ENCODE measurements at regions of chr6 and their contacts with region 1.

Region 1: DNA sequence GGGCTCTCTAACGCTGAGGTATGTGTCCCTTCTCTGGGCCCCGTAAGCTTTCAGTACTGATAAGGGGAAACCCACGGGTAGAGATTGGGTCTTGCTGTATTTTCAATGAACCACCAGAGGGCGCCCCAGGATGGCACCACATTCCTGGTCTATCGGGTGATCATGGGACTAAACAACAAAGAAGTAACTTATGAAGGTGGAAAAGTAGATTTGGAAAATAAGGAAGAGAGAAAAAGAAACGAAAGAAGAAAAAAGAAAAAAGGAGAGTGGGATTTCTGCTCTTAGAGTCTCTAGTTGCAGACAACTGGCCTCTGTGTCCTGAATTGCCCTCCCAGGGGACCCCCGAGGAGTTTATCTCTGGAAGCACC is 93.8 kb downstream of the GMPR start:
- DNase-seq: peak; percentile 94
- H3K4me3 Mint-ChIP-seq: no peak overlapping the region
- H3K27ac Mint-ChIP-seq: no peak overlapping the region
- H3K4me1 Mint-ChIP-seq: no peaks in the 10 kb centered on the region
- H3K27me3 Mint-ChIP-seq: no peaks in the 10 kb centered on the region

Region 2: GRCh38 chr6:15504581-15505350 is 827.4 kb before region 1 on chr6:
- CTCF ChIA-PET with region 1: no interaction called
- intact Hi-C with region 1: no loop called
- DNase-seq: no peak
- H3K4me3 Mint-ChIP-seq: no peak overlapping the region
- H3K27ac Mint-ChIP-seq: no peak overlapping the region
- H3K4me1 Mint-ChIP-seq: no peaks in the 10 kb centered on the region
- H3K27me3 Mint-ChIP-seq: no peaks in the 10 kb centered on the region

Region 3: DNA sequence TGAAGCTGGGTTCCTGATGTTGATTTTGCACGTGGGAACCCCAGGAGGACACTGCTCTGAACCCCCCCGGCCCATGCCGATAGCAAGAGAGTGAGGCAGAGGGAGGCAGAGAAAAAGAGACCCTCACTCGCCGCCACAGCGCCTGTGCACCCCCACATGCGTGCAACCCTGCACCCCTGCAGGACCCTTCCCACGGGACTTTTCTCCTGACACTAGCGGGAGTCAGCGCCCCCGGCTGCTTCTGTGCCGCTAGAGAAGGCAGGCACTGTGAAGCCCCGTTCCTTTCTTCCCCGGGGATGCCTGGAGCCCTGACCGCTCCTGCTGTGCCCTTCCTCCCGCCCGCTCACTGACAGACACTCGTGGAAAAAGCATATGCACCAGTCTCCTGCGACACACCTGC is 26.4 kb before region 1 on chr6:
- CTCF ChIA-PET with region 1: no interaction called
- intact Hi-C with region 1: no loop called
- DNase-seq: no peak
- H3K4me3 Mint-ChIP-seq: no peak overlapping the region
- H3K27ac Mint-ChIP-seq: no peak overlapping the region
- H3K4me1 Mint-ChIP-seq: no peaks in the 10 kb centered on the region
- H3K27me3 Mint-ChIP-seq: no peaks in the 10 kb centered on the region

Region 4: GRCh38 chr6:16343593-16343992 is 11.4 kb after region 1 on chr6:
- CTCF ChIA-PET with region 1: interaction called, 11 read pairs
- intact Hi-C with region 1: no loop called
- DNase-seq: no peak
- H3K4me3 Mint-ChIP-seq: no peak overlapping the region
- H3K27ac Mint-ChIP-seq: no peak overlapping the region
- H3K4me1 Mint-ChIP-seq: peaks cover 5% of the 10 kb centered on the region
- H3K27me3 Mint-ChIP-seq: no peaks in the 10 kb centered on the region

Region 5: DNA sequence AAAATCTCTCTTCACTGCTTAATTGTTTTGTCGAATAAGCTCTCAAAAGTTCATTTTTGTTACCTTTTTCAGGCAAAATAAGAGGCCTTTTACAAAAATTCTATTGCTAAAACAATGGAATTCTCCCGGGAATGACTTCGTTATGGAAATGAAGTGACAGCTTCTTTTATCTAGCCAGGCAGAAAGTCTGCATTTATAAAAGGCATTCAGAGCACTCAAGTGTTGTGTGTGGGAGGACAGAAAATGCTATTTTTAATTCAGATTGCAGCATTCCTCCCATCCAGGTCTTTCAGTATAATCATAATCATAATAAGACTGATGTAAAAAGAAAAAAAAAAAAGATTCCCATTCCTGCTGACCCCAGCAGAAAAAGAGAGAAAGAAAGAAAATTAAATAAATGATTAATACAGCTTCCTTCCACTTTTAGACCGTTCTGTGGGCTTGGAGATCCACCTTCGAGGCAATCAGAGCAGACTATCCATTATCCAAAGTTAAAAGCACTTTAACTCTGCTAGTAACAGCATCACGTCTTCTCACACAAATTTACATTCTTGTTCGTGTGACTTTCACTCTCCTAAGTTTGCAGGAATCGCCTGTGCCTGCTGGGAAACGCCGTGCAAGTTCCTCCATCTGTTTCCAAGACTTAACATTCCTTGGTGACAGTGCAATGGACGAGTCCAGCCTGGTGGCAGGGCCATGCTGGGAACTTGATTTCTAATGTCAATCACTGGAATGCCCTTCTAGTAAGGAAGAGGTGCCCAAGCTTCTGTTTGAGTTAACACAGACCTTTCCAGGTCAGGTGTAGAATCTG is 165.0 kb after region 1 on chr6:
- CTCF ChIA-PET with region 1: interaction called, 5 read pairs
- intact Hi-C with region 1: loop called (anchors 1 kb)
- DNase-seq: no peak
- H3K4me3 Mint-ChIP-seq: no peak overlapping the region
- H3K27ac Mint-ChIP-seq: no peak overlapping the region
- H3K4me1 Mint-ChIP-seq: peaks cover 32% of the 10 kb centered on the region
- H3K27me3 Mint-ChIP-seq: no peaks in the 10 kb centered on the region

Region 6: GRCh38 chr6:16819752-16820151 is 487.6 kb after region 1 on chr6:
- CTCF ChIA-PET with region 1: interaction called, 4 read pairs
- intact Hi-C with region 1: loop called (anchors 1 kb)
- DNase-seq: no peak
- H3K4me3 Mint-ChIP-seq: no peak overlapping the region
- H3K27ac Mint-ChIP-seq: no peak overlapping the region
- H3K4me1 Mint-ChIP-seq: no peaks in the 10 kb centered on the region
- H3K27me3 Mint-ChIP-seq: peaks cover 12% of the 10 kb centered on the region

Region 7: DNA sequence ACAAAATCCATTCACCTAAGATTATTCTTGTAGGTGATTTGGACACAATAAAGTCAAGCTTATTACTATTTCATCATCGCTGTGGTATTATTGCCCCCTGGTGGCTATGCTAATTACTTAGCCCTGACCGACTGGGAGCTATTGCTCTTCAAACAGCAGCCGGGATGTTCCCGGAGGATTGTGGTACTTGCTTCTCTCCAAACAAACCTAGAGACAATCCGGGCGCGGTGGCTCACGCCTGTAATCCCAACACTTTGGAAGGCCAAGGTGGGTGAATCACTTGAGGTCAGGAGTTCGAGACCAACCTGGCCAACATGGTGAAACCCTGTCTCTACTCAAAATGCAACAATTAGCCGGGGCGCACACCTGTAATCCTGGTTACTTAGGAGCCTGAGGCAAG is 754.3 kb after region 1 on chr6:
- CTCF ChIA-PET with region 1: interaction called, 7 read pairs
- intact Hi-C with region 1: loop called (anchors 1 kb)
- DNase-seq: peak; percentile 46
- H3K4me3 Mint-ChIP-seq: no peak overlapping the region
- H3K27ac Mint-ChIP-seq: no peak overlapping the region
- H3K4me1 Mint-ChIP-seq: no peaks in the 10 kb centered on the region
- H3K27me3 Mint-ChIP-seq: peaks cover 8% of the 10 kb centered on the region